AG04449 (cell line): ENCODE measurements at regions of chr20 and their contacts with region 1.

Region 1: DNA sequence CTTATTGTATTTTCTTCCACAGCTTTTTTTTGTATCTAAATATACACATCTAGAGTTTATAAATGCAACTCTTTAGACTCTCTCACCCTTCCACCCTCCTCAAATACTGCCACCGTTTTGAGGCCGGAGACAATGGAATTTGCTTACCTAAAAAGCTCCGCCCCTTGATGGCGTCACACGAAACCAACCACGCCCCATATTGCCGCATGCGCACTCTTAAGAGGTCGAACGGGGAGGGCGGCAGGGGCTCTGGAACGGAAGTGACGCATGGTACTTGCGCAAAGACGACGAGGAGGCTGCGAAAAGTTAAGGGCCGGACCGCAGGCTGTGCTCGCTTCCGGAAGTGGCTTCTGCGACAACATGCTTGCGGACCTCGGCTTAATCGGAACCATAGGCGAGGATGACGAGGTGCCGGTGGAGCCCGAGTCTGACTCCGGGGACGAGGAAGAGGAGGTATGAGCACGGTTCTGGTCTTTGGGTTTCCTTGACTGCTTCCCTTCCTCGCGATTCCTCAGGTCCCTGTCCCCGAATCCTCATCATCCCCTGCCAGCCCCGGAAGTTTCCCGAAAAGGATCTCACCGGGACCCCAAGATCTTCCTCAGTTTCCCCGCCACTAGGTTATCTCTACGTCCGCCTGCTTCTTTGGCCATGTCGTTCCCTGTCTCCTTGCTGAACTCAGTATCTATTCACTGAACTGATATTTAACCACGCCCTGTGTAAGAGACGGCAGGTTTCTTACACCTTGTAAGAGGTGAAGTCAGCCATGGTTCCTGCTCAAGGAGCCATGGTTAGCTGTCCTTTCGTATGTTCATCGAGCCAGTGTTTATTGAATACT is at the start of gene DDX27:
- DNase-seq: peak; percentile 92
- H3K4me3 ChIP-seq: peak within 1 kb of the TSS; percentile 100
- CTCF ChIP-seq: no peak

Region 2: DNA sequence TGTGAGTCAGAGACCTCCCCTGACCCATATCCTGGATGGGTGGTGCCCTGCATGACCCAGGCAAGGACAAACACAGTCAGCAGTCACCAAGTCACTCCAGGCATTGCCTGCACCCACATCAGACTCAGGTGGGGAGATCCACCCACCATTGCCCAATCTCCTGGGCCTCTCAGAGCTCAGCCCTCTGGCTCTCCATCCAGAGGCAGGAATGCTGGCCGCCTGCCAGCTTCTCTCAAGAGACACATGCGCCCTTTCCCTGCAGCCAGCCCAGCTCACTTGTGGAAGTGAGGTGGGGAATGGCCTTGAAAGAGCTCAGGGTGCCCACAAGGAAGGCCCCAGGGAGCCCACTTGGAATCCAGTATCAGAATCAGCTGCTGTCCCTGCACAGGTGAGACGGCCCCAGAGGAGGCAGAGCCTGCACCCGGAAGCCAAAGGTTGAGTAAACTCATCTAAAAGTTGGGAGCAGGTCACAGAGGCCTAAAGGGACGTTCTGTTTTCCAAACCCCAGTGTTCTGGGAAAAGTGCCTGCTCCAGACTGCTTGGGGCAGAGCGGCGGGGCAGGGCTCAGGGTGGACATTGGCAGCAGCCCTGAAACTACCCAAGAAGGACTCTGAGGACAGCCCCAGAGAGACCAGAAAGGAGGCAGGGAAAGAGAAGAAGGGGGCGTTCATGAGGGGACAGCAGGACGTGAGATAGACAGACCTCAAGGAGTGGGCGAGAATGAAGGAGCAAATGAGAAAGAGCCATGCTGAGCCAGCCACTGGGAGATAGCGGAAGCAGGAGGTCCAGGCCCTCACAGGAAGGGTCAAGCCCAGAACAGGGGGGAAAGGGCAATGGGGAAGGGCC is 521.2 kb before region 1 on chr20:
- CTCF ChIA-PET with region 1: no interaction called
- POLR2A ChIA-PET with region 1: no interaction called
- DNase-seq: no peak
- H3K4me3 ChIP-seq: no peak overlapping the region
- CTCF ChIP-seq: no peak

Region 3: GRCh38 chr20:48959902-48960550 is 259.3 kb before region 1 on chr20:
- CTCF ChIA-PET with region 1: no interaction called
- POLR2A ChIA-PET with region 1: no interaction called
- DNase-seq: no peak
- H3K4me3 ChIP-seq: no peak overlapping the region
- CTCF ChIP-seq: no peak

Region 4: DNA sequence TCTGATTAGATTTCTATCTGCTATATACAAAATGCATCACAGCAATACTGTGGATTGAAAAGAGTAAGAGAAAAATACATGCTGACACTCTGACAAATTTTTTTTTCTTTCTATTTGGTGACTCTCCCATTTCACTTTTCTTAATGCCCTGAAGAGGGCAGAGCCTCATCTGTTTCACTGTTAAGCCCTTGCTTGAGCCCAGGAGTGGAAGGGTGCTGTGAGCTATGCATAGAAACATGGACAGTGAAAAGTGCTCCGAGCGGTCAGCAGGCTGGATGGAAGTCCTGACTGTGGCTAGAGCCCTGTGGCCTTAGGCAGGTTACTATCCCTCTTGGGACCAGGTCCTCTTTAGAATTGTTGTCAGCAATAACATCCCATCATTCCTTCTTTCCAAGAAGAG is 190.6 kb before region 1 on chr20:
- CTCF ChIA-PET with region 1: interaction called, 20 read pairs
- POLR2A ChIA-PET with region 1: no interaction called
- DNase-seq: no peak
- H3K4me3 ChIP-seq: no peak overlapping the region
- CTCF ChIP-seq: no peak

Region 5: GRCh38 chr20:49122920-49123319 is 96.4 kb before region 1 on chr20:
- CTCF ChIA-PET with region 1: interaction called, 53 read pairs
- POLR2A ChIA-PET with region 1: no interaction called
- DNase-seq: no peak
- H3K4me3 ChIP-seq: no peak overlapping the region
- CTCF ChIP-seq: no peak

Region 6: DNA sequence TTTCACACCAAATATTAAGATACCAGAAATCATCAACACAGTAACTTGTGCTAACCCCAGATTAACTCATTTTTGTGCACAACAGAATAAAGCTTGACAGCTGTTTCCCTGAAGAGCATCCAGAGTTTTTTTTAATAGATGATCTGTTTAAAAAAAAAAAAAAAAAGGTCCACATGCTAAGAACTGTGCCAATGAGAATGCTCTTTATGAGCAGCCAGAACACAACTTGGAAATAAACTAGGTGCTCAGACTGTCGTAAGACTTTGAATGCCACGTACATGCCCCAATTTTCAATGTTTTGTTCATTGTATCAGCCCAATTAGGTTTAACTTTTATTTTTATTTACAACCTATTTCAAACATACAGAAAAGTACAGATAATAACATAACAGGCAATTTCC is 78.5 kb before region 1 on chr20:
- CTCF ChIA-PET with region 1: interaction called, 258 read pairs
- POLR2A ChIA-PET with region 1: no interaction called
- DNase-seq: no peak
- H3K4me3 ChIP-seq: no peak overlapping the region
- CTCF ChIP-seq: no peak

Region 7: DNA sequence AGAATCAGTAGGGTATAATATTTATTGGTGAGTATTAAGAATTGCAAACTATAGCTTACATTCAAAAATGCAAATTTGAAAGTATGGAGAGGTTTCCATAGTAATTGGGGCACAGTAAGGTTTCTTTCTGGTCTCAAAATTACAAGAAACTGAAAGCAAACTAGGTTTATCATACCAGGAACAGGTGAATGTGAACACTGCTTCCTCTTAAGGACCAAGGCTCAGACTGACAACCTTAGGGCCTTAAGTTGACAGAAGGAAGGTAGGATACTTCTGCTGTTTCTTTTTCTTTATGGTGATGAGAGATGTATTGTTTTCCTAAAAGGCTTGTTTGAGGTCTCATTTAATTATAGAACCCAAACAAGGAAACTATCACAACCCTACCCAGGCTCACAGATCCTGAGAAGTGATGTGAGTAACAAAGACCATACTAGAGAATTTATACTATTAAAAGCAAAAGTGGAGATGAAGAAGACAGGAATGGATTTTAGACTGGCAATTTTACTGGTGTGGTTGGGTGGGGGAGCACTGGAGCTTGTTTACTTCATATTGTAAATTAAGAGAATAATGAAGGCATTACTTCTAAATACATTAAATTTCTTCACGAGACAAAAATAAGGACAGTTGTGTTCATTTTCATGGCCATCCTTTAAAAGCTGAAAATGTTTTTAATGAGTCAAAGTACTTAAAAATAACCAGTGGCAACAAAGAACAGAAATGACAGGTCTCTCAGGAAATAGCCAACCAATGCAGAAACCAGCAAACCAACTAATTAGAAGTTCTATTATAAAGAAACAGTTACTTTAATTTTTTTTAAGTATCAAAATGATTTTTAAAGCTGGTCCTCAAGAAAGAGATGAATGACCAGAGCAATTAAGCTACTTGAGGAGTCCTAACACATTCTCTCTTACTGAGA is 52.5 kb before region 1 on chr20:
- CTCF ChIA-PET with region 1: interaction called, 17 read pairs
- POLR2A ChIA-PET with region 1: interaction called, 4 read pairs
- DNase-seq: no peak
- H3K4me3 ChIP-seq: no peak overlapping the region
- CTCF ChIP-seq: no peak

Region 8: DNA sequence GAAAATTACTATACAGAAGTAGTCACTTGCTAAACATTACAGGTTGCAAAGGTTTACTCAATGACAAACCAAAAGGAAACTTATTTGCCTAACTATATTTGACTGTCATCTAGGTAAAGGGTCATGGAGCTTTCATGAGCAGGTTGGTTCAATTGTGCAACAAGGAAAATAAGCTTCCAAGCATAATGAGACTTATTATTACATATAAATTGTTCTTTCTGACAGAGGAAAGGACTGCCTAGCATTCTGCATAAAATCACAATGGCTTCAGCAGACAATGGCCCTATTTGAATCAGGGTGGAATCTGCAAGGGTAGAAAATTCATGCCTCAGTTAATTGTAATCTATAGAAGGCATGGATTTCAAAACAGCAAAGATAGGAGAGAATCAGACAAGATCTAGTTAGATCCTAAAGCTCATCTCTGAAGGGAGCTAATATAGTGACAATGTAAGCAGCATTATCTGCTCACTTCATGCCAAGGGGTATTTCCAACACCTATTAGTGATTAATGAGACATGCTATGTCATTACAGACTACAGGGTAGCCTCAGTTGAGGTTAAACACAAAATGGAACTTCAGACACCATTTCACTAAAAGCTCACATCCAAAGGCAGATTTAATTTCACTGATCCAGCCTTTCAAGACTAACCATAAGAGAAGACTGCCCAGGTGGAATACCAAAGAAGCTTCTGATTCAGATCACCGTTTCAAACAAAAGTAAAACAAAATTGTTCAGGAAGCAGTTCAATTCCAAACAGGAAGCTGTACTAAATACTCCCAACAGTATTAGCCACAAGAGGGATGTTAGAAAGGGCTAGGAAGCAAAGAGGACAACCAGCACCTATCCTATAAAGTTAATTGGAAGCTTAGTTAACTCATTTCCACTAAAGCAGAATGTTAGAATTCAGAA is 39.7 kb before region 1 on chr20:
- CTCF ChIA-PET with region 1: interaction called, 47 read pairs
- POLR2A ChIA-PET with region 1: interaction called, 5 read pairs
- DNase-seq: no peak
- H3K4me3 ChIP-seq: no peak overlapping the region
- CTCF ChIP-seq: no peak

Region 9: GRCh38 chr20:49207076-49207475 is 12.2 kb before region 1 on chr20:
- CTCF ChIA-PET with region 1: interaction called, 63 read pairs
- POLR2A ChIA-PET with region 1: no interaction called
- DNase-seq: no peak
- H3K4me3 ChIP-seq: no peak overlapping the region
- CTCF ChIP-seq: no peak